PC-3 (cell line): ENCODE measurements at regions of chr2 and their contacts with region 1.

Region 1: GRCh38 chr2:223860809-223861738 is 23.7 kb upstream of the AP1S3 start:
- DNase-seq: peak; percentile 95
- ATAC-seq: peak; percentile 87
- H3K4me3 ChIP-seq: peak overlapping the region; percentile 36; the same call in 1 of the 2 replicates
- H3K27ac ChIP-seq: peak overlapping the region; percentile 97
- H3K4me1 ChIP-seq: peaks cover 42% of the 10 kb centered on the region
- H3K27me3 ChIP-seq: no peaks in the 10 kb centered on the region
- CTCF ChIP-seq: peak; percentile 50

Region 2: GRCh38 chr2:223692191-223692947 is 168.7 kb before region 1 on chr2:
- CTCF ChIA-PET with region 1: interaction called, 4 read pairs
- POLR2A ChIA-PET with region 1: no interaction called
- intact Hi-C with region 1: loop called (anchors 2 kb)
- DNase-seq: peak; percentile 79
- ATAC-seq: peak; percentile 70
- H3K4me3 ChIP-seq: no peak overlapping the region
- H3K27ac ChIP-seq: no peak overlapping the region; the same call in 1 of the 2 replicates
- H3K4me1 ChIP-seq: peaks cover 16% of the 10 kb centered on the region
- H3K27me3 ChIP-seq: no peaks in the 10 kb centered on the region
- CTCF ChIP-seq: peak; percentile 89

Region 3: DNA sequence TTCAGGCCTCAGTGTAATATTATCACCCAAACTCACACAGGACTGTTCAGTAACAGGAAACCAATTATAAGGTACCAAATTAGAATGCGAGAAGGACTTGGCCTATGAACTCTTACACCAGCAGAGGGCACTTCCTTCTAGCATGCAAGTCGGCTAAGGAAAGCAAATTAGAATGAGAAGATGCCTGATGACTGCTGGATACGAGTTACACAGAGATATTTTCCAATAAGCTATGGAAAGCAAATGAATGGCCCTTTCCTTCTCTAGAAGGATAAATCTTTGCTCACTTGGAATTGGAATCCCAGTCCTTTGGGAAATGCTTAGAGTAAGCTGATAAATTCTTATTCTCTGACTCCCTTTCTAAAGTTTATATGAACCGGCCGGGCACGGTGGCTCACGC is 133.5 kb before region 1 on chr2:
- CTCF ChIA-PET with region 1: interaction called, 3 read pairs
- POLR2A ChIA-PET with region 1: no interaction called
- intact Hi-C with region 1: loop called (anchors 2 kb)
- DNase-seq: peak; percentile 69
- ATAC-seq: peak; percentile 40
- H3K4me3 ChIP-seq: no peak overlapping the region
- H3K27ac ChIP-seq: peak overlapping the region; percentile 24
- H3K4me1 ChIP-seq: peaks cover 28% of the 10 kb centered on the region
- H3K27me3 ChIP-seq: no peaks in the 10 kb centered on the region
- CTCF ChIP-seq: peak; percentile 83

Region 4: DNA sequence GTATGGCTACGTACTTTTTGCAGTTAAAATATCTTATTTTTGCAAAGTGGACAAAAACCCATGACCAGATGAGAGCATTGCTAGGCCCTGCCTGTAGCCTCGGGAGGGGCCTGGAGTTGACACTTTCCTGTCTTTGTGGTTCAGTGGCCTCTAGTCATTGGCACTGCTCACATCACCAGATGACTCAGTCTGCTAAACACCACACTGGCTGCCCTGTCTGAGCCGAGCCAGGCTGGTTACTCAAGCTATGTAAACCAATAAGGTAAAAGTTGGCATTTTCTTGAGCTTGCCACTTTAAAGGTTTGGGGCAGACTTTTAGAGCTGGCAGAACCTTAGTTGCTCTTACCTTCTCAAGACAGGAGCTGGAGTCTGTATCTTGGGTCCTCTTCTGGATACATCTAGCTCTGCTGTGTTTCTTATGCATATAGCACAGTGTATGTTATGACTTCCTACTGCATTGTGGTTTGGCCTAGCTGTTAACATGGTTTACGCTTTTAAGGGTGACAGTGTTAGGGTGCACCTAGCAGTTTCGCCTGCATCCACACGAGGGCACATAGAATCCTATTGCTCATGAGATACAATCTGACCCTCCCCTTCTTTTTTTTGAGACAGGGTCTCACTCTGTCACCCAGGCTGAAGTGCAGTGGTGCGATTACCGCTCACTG is 100.1 kb before region 1 on chr2:
- CTCF ChIA-PET with region 1: interaction called, 10 read pairs
- POLR2A ChIA-PET with region 1: no interaction called
- intact Hi-C with region 1: no loop called
- DNase-seq: peak; percentile 96
- ATAC-seq: peak; percentile 95
- H3K4me3 ChIP-seq: peak overlapping the region; percentile 27; the same call in 1 of the 2 replicates
- H3K27ac ChIP-seq: peak overlapping the region; percentile 99
- H3K4me1 ChIP-seq: peaks cover 36% of the 10 kb centered on the region
- H3K27me3 ChIP-seq: no peaks in the 10 kb centered on the region
- CTCF ChIP-seq: peak; percentile 62

Region 5: DNA sequence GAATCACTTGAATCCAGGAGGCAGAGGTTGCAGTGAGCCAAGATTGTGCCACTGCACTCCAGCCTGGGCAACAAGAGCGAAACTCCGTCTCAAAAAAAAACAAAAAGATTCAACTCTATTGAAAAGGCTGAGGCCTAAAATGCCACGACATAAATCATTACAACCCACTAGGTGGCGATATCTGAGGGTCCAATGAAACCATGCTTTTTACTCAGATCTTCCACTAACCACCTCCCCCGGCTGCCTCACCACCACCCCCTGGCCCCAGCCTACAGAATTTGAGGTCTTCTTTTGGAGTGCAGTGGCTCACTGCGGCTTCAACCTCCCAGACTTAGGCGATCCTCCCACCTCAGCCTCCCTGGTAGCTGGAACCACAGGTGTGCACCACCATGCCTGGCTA is 81.2 kb before region 1 on chr2:
- CTCF ChIA-PET with region 1: no interaction called
- POLR2A ChIA-PET with region 1: no interaction called
- intact Hi-C with region 1: loop called (anchors 5 kb)
- DNase-seq: peak; percentile 84
- ATAC-seq: peak; percentile 80
- H3K4me3 ChIP-seq: no peak overlapping the region
- H3K27ac ChIP-seq: no peak overlapping the region
- H3K4me1 ChIP-seq: no peaks in the 10 kb centered on the region
- H3K27me3 ChIP-seq: no peaks in the 10 kb centered on the region
- CTCF ChIP-seq: peak; percentile 60

Region 6: GRCh38 chr2:223815186-223815883 is 45.7 kb before region 1 on chr2:
- CTCF ChIA-PET with region 1: no interaction called
- POLR2A ChIA-PET with region 1: no interaction called
- intact Hi-C with region 1: loop called (anchors 2 kb)
- DNase-seq: peak; percentile 98
- ATAC-seq: peak; percentile 75
- H3K4me3 ChIP-seq: peak overlapping the region; percentile 29; the same call in 1 of the 2 replicates
- H3K27ac ChIP-seq: peak overlapping the region; percentile 85
- H3K4me1 ChIP-seq: peaks cover 58% of the 10 kb centered on the region
- H3K27me3 ChIP-seq: no peaks in the 10 kb centered on the region
- CTCF ChIP-seq: no peak

Region 7: DNA sequence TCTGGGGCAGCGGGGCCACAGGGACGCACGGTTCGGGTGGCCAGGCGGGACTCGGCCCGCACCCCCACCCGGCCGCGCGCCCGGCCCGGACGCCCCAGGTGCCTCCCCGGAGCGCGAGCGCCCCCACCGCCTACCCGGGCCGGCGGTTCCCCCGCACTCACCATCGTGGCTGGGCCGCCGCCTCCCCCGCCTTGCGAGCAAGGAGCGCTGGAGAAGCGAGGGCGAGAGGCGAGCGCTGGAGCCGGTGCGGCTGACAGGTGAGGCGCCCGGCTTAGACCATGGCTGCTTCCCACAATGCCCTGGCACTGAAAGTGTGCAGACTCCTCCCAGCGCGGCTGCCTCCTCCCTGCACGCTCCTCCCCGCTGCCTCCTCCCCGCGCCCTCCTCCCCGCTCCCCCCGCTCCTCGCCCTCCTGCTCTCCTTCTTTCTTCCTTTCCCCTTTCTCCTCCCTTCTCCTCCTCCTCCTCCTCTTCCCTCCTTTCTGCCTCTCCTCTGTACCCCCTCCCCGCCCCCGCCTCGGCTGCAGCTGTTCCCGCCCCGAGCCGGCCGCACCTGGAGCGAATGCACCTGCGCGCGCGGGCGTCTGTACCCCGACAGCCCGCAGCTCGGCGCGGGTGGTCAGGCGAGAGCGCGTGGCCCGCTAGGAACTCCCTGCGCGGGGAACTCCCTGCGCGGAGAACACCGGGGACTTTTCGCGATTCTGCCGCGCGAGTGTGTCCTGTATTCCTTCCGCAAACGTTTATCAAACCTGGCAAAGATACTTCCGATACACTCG is 23.6 kb before region 1 on chr2 and contains the start of gene AP1S3:
- CTCF ChIA-PET with region 1: interaction called, 3 read pairs
- POLR2A ChIA-PET with region 1: no interaction called
- intact Hi-C with region 1: loop called (anchors 1 kb)
- DNase-seq: peak; percentile 84
- ATAC-seq: peak; percentile 87
- H3K4me3 ChIP-seq: peak within 1 kb of the TSS; percentile 95
- H3K27ac ChIP-seq: peak within 1 kb of the TSS; percentile 71
- H3K4me1 ChIP-seq: peaks cover 27% of the 10 kb centered on the region; the same call in 1 of the 2 replicates
- H3K27me3 ChIP-seq: no peaks in the 10 kb centered on the region
- CTCF ChIP-seq: no peak
- total RNA-seq, gene AP1S3: 34.3 and 37.6 TPM in 2 replicates

Region 8: GRCh38 chr2:224008702-224009261 is 147.7 kb after region 1 on chr2:
- CTCF ChIA-PET with region 1: no interaction called
- POLR2A ChIA-PET with region 1: no interaction called
- intact Hi-C with region 1: no loop called
- DNase-seq: no peak
- ATAC-seq: no peak
- H3K4me3 ChIP-seq: no peak overlapping the region
- H3K27ac ChIP-seq: no peak overlapping the region
- H3K4me1 ChIP-seq: peaks cover 11% of the 10 kb centered on the region
- H3K27me3 ChIP-seq: no peaks in the 10 kb centered on the region
- CTCF ChIP-seq: no peak